Thyroid gland (tissue), 4 donors: ENCODE measurements at regions of chr14 and their contacts with region 1.

Region 1: DNA sequence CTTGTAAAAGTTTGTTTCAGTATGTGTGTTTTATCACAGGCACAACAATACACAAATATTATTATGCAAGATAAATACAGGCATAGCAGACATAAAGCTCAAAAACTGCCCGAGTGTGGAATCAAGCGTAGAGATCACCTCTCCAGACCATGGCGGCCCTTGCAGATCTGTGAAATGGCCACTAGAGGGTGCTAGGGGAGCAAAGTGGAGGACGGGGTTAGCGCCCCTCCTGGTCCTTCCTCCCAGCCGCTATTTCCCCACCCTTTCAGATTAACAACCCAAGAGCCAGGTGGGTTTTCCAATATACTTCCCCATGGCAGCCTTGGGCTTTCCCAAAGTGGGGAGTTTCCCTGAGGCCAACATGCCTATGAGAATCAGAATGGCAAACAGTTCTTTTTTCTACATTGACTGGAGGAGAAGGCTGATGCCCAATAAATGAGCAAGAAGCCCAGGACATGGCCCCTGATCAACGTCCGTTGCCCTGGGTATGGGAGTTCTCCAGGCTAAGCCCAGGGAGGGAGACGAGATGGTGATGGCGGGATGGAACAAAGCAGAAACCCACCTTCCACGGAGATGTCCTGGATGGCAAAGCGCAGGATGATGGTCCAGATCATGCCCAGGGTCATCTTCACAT is 67.4 kb downstream of the ACTN1 start:
- DNase-seq: peak; percentile 65 to 77
- H3K4me3 ChIP-seq: no peak overlapping the region
- H3K27ac ChIP-seq: no peak overlapping the region
- H3K4me1 ChIP-seq: no peaks in the 10 kb centered on the region
- H3K27me3 ChIP-seq: no peaks in the 10 kb centered on the region
- CTCF ChIP-seq: peak; percentile 92 to 99 (median 96)
- POLR2A ChIP-seq: no peak

Region 2: DNA sequence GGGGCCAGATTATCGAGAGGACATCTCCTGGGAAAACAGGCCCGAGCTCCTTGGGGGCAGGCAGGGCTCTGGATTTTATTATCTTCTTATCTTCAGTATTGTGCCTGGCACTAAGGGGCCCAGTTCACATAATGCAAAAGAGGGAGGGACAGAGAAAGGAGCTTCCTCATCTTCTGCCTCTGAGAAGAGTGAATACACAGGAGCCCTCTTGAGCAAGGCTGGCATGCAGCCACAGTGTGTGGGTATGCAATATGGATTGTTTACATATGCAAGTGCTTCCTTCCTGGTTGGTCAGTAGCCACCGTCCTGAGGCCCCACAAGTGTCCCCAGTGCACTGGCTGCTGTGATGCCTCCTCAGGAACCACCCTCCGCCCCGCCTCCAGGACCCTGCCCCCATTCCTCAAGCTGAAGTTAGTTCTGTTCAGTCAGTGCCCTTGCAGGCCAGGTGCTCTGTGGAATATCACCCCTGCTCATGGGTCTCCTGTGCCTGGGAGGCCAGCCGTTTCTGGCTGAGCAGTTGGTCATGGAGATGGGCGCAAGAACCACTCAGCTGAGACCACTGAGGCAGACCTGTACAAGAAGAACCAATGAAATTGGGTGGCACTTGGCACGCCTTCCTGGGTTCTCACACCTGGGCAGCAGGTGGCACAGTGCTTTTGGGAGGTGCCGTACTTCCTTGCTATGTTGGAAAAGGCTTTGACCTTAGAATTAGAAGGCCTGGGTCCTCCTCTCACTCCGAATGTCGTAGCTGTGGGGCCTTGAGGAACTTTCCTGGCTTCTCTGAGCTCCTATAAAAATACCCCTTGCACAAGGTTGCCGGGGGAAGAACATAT is 102.4 kb after region 1 on chr14:
- intact Hi-C with region 1: no loop called
- DNase-seq: peak; percentile 29 to 47
- H3K4me3 ChIP-seq: no peak overlapping the region
- H3K27ac ChIP-seq: no peak overlapping the region
- H3K4me1 ChIP-seq: no peaks in the 10 kb centered on the region
- H3K27me3 ChIP-seq: no peaks in the 10 kb centered on the region
- CTCF ChIP-seq: no peak
- POLR2A ChIP-seq: no peak

Region 3: DNA sequence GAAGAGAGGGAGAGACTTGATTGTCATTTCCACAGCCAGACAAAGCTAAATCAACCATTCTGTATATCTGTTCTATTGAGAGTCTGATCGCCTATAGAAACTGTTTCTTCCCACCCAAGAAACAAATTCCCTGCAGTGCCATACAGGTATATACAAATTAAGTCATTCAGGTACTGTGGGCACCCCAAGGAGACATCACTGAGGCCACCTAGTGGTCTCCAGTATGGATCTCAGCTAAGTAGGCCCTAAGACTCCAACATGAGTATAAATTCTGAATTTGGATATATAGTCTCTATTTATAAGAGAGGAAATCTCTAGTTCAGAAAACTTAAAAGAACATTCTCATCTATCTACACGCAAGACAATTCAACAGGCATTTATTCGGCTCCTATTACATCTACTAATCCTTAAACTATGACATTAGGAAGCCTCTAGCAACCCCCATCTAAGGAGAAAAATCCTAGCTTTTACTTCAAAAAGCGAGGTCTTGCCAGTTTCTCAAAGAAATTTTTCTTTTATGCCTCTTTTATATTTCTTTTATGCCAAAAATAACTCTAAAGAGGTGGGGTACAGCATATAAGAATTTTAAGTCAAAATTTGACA is 178.6 kb after region 1 on chr14:
- intact Hi-C with region 1: loop called (anchors 5 kb)
- DNase-seq: peak; percentile 54 to 55
- H3K4me3 ChIP-seq: no peak overlapping the region
- H3K27ac ChIP-seq: peak overlapping the region; percentile 34 to 91 (median 42)
- H3K4me1 ChIP-seq: peaks cover 33 to 48% of the 10 kb centered on the region in 2 donors
- H3K27me3 ChIP-seq: no peaks in the 10 kb centered on the region
- CTCF ChIP-seq: peak in 5 of 6 experiments; percentile 36 to 74 (median 71)
- POLR2A ChIP-seq: no peak

Region 4: DNA sequence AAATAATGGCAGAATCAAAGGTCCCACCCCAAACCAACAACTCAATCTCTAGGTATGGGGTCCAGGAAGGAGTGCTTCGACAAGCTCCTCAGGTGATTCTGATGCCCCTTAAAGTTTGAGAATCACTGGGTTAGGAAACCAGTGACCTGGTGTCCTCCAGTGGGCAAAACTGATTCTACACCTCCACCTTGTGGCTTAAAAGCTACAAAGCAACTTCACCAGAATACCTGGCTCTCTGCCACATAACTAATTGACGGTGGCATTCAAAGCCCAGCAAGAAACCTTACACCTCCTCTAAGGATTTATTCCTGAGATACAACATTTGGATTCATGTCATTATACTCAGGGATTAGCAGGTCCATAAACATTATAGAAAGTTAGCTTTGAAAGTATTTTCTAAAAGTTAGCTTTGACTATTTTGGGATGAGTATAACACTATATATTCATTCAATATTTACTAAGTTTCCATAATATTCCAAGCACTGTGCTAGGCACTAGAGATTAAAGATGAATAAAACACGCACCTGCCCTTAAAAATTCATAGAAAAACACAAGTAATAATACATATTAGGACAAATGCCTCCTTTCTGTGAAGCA is 195.8 kb after region 1 on chr14:
- intact Hi-C with region 1: loop called (anchors 5 kb)
- DNase-seq: peak; percentile 37 to 48
- H3K4me3 ChIP-seq: no peak overlapping the region
- H3K27ac ChIP-seq: no peak overlapping the region
- H3K4me1 ChIP-seq: no peaks in the 10 kb centered on the region
- H3K27me3 ChIP-seq: no peaks in the 10 kb centered on the region
- CTCF ChIP-seq: peak in 5 of 6 experiments; percentile 50 to 94 (median 76)
- POLR2A ChIP-seq: no peak